HEK293 (cell line): ENCODE measurements at regions of chr1 and their contacts with region 1.

Region 1: DNA sequence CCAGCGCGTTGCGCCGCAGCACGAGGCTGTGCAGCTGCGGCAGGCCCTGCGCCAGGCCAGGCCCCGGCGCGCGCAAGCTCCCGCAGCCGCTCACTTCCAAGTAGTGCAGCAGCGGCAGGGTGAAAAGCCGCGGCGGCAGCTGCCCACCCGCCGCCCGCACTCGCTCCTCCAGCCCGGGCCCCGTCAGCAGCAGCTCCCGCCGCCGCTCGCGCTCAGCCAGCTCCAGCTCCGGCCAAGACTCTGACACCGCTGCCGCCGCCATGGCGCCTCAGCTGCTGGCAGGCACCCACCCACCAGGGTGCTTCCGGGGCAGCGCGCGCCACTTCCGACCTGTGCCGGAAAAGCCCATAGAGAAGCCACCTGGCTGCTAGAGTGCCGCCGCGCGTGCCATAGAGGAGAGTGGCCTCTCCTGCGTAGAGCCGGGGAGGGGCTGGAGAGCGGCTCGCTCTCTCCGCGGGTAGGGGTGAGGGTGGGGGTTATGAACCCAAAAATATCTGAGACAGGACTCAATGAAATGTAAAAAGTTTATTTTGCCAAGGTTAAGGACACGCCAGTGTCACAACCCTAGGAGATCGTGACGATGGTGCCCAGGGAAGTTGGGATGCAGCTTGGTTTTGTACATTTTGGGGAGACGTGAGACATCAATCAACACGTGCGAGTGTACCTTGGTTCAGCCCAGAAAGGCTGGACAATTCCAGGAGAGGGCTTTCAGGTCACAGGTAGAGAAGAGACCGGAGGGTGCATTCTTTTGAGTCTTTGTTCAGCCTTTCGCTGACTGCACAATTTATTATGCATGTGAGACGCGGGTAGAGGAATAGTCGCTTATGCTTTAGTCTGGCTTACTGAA is at the start of gene LRRC47:
- H3K4me3 ChIP-seq: peak within 1 kb of the TSS; percentile 93
- H3K27ac ChIP-seq: peak within 1 kb of the TSS; percentile 63; the same call in 1 of the 2 replicates
- H3K4me1 ChIP-seq: peaks cover 3% of the 10 kb centered on the region; the same call in 1 of the 2 replicates
- CTCF ChIP-seq: no peak

Region 2: GRCh38 chr1:3775490-3776230 is 20.8 kb before region 1 on chr1:
- CTCF ChIA-PET with region 1: interaction called, 10 read pairs
- POLR2A ChIA-PET with region 1: interaction called, 7 read pairs
- H3K4me3 ChIP-seq: no peak overlapping the region
- H3K27ac ChIP-seq: no peak overlapping the region
- H3K4me1 ChIP-seq: no peaks in the 10 kb centered on the region
- CTCF ChIP-seq: peak; percentile 92

Region 3: DNA sequence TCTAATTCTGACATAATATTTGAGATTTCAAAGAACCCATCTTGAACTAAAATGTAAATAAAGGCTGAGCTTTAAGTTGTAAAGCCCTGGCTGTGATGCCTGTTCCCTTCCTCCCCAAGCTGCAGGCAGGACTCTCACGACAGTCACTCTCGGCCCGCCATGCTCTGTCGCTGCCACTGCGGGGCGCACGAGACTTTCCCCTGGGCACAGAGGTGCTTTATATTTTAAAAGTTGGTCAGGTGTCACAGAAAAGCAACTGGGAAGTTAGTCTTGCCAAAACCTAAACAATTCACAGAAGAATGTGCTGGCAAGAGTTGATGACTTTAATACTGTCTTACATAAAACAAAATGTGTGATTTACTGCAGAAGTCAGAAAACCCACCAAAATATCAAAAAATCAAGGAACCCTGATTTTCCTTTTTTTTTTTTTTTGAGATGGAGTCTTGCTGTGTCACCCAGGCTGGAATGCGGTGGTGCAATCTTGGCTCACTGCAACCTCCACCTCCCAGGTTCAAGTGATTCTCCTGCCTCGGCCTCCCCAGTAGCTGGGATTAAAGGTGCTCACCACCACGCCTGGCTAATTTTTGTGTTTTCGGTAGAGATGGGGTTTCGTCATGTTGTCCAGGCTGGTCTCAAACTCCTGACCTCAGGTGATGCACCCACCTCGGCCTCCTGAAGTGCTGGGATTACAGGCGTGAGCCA is 10.8 kb before region 1 on chr1:
- CTCF ChIA-PET with region 1: interaction called, 11 read pairs
- POLR2A ChIA-PET with region 1: interaction called, 5 read pairs
- H3K4me3 ChIP-seq: no peak overlapping the region
- H3K27ac ChIP-seq: no peak overlapping the region
- H3K4me1 ChIP-seq: no peaks in the 10 kb centered on the region
- CTCF ChIP-seq: no peak